Activated naive CD4-positive, alpha-beta T cell treated with anti-CD3 and anti-CD28 coated beads for 36 hours (primary cell): ENCODE measurements at regions of chr6 and their contacts with region 1.

Region 1: GRCh38 chr6:1396952-1397868 is 7.8 kb downstream of the FOXF2 start:
- DNase-seq: peak; percentile 80
- H3K4me3 Mint-ChIP-seq: no peak overlapping the region
- H3K27ac Mint-ChIP-seq: no peak overlapping the region
- H3K4me1 Mint-ChIP-seq: peaks cover 10% of the 10 kb centered on the region
- H3K27me3 Mint-ChIP-seq: peaks cover 53% of the 10 kb centered on the region

Region 2: GRCh38 chr6:1407499-1407990 is 10.3 kb after region 1 on chr6:
- CTCF ChIA-PET with region 1: interaction called, 11 read pairs
- intact Hi-C with region 1: no loop called
- DNase-seq: no peak
- H3K4me3 Mint-ChIP-seq: no peak overlapping the region
- H3K27ac Mint-ChIP-seq: no peak overlapping the region
- H3K4me1 Mint-ChIP-seq: no peaks in the 10 kb centered on the region
- H3K27me3 Mint-ChIP-seq: peaks cover 17% of the 10 kb centered on the region

Region 3: DNA sequence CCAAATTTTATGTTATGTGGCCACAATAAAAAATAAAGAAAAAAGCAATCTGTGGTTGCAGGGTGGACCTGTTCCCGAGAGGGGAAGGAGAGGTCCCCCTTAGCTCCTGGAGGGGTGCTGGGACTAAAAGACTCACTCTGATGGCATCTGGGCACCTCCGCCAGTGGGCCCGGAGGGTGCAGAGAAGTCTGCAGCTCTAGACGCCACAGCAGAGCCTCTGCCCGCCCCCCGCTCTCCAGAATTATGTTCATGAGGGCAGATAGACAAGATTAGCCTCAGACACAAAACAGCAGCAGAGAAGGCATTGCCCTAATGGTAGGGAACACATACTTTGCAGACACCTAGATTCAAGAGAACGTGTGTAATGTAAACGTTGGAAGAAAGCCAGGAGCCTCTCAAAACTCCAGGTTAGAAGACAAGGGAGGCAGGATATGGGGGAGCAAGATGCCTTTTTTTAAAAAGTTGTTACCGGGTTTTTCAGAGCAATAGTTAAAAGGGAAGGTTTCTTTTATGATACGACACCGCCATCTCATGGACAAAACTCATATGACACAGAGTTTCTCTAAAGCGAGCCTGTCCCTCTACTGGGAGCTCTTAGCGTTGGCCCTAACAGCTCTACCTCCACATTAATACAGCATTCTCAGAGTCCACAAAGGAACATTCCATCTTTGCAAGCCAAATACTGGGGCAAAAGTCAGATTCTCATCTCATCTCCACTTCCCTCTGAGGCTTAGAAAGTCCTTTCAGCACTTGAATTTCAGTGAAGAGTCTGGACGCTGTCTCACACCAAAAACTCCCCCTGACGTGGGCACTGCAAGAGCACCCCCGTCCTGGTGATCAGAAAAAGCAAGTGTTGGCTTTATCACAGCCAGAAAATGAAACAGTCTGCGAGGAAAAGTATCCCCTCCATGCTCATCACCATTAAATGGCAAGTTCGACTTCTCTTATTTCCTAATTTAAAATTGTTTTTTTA is 39.4 kb after region 1 on chr6:
- CTCF ChIA-PET with region 1: no interaction called
- intact Hi-C with region 1: loop called (anchors 2 kb)
- DNase-seq: peak; percentile 63
- H3K4me3 Mint-ChIP-seq: no peak overlapping the region
- H3K27ac Mint-ChIP-seq: no peak overlapping the region
- H3K4me1 Mint-ChIP-seq: no peaks in the 10 kb centered on the region
- H3K27me3 Mint-ChIP-seq: peaks cover 42% of the 10 kb centered on the region